MCF 10A (cell line): ENCODE measurements at regions of chr5 and their contacts with region 1.

Region 1: GRCh38 chr5:143142596-143143435 is 260.7 kb downstream of the NR3C1 start:
- DNase-seq: peak; percentile 97
- H3K4me3 Mint-ChIP-seq: peak overlapping the region; percentile 33
- H3K27ac Mint-ChIP-seq: peak overlapping the region; percentile 91
- H3K4me1 Mint-ChIP-seq: peaks cover 54% of the 10 kb centered on the region
- H3K27me3 Mint-ChIP-seq: no peaks in the 10 kb centered on the region
- CTCF ChIP-seq: no peak

Region 2: DNA sequence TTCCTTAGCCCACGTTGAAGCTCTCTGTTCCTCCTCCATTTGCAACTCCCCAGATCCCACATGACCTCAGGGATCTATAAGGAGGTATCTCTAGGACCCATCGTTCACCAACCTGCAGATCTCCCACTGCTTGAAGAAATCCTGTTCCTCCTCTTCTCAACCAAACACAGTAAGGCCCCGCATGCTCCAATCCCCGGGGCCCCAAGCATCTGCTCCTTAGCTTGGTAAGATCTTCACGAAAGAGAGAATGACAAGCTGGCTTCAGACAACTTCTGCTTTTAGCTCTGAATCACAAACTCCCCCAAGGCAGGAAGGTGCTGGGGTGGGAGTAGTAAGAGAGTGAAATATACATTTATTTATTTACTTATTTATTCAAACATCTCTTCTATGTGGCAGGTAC is 405.6 kb before region 1 on chr5:
- CTCF ChIA-PET with region 1: no interaction called
- POLR2A ChIA-PET with region 1: no interaction called
- intact Hi-C with region 1: no loop called
- DNase-seq: no peak
- H3K4me3 Mint-ChIP-seq: no peak overlapping the region
- H3K27ac Mint-ChIP-seq: no peak overlapping the region
- H3K4me1 Mint-ChIP-seq: no peaks in the 10 kb centered on the region
- H3K27me3 Mint-ChIP-seq: no peaks in the 10 kb centered on the region
- CTCF ChIP-seq: no peak

Region 3: GRCh38 chr5:143066556-143067281 is 76.1 kb before region 1 on chr5:
- CTCF ChIA-PET with region 1: interaction called, 6 read pairs
- POLR2A ChIA-PET with region 1: interaction called, 27 read pairs
- intact Hi-C with region 1: no loop called
- DNase-seq: no peak
- H3K4me3 Mint-ChIP-seq: no peak overlapping the region
- H3K27ac Mint-ChIP-seq: no peak overlapping the region
- H3K4me1 Mint-ChIP-seq: peaks cover 32% of the 10 kb centered on the region
- H3K27me3 Mint-ChIP-seq: no peaks in the 10 kb centered on the region
- CTCF ChIP-seq: no peak

Region 4: DNA sequence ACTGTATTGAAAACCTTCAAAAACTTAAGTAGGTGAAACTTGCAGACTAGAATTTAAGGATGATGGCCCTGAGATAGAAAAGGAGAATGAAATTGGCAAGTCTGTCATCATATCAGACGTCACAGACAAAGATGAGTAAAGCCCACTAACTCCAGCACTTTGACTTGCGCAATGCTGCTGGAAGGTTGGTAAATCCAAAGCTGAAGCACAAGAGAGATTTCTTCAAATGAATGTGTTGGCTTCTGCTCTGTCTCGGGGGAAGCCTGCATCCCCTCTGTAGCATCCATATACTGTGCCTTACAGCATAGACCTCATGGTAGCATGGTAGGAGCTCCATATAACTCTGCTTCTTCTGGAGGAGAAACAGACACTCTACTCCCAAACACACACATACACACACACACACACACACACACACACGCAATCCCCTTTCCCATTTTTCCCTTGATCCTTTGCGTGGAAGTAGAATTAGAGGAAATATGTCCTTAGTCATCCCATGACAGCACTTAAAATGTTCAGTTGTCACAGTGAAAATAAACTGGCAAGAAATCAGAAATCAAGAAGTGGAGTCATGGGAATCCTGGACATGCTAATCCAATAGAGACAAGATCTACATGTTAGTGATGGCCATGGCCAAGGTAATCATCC is 19.2 kb after region 1 on chr5:
- CTCF ChIA-PET with region 1: interaction called, 5 read pairs
- POLR2A ChIA-PET with region 1: interaction called, 27 read pairs
- intact Hi-C with region 1: no loop called
- DNase-seq: peak; percentile 96
- H3K4me3 Mint-ChIP-seq: no peak overlapping the region
- H3K27ac Mint-ChIP-seq: peak overlapping the region; percentile 25
- H3K4me1 Mint-ChIP-seq: peaks cover 38% of the 10 kb centered on the region
- H3K27me3 Mint-ChIP-seq: no peaks in the 10 kb centered on the region
- CTCF ChIP-seq: no peak

Region 5: GRCh38 chr5:143195491-143195890 is 52.7 kb after region 1 on chr5:
- CTCF ChIA-PET with region 1: no interaction called
- POLR2A ChIA-PET with region 1: interaction called, 31 read pairs
- intact Hi-C with region 1: loop called (anchors 5 kb)
- DNase-seq: peak; percentile 80
- H3K4me3 Mint-ChIP-seq: no peak overlapping the region
- H3K27ac Mint-ChIP-seq: peak overlapping the region; percentile 60
- H3K4me1 Mint-ChIP-seq: peaks cover 35% of the 10 kb centered on the region
- H3K27me3 Mint-ChIP-seq: no peaks in the 10 kb centered on the region
- CTCF ChIP-seq: no peak

Region 6: GRCh38 chr5:143262393-143263174 is 119.8 kb after region 1 on chr5:
- CTCF ChIA-PET with region 1: no interaction called
- POLR2A ChIA-PET with region 1: interaction called, 3 read pairs
- intact Hi-C with region 1: loop called (anchors 5 kb)
- DNase-seq: peak; percentile 95
- H3K4me3 Mint-ChIP-seq: peak overlapping the region; percentile 7
- H3K27ac Mint-ChIP-seq: peak overlapping the region; percentile 61
- H3K4me1 Mint-ChIP-seq: peaks cover 35% of the 10 kb centered on the region
- H3K27me3 Mint-ChIP-seq: no peaks in the 10 kb centered on the region
- CTCF ChIP-seq: no peak